IMR-90 (cell line): ENCODE measurements at regions of chrX and their contacts with region 1.

Region 1: GRCh38 chrX:110992611-110993010 is 103.4 kb upstream of the PAK3 start:
- DNase-seq: peak; percentile 13
- ATAC-seq: no peak
- H3K4me3 ChIP-seq: no peak overlapping the region
- H3K27ac ChIP-seq: no peak overlapping the region
- H3K4me1 ChIP-seq: no peaks in the 10 kb centered on the region
- H3K27me3 ChIP-seq: peaks cover 11% of the 10 kb centered on the region
- CTCF ChIP-seq: peak; percentile 44
- POLR2A ChIP-seq: no peak
- RAD21 ChIP-seq: peak; percentile 35

Region 2: DNA sequence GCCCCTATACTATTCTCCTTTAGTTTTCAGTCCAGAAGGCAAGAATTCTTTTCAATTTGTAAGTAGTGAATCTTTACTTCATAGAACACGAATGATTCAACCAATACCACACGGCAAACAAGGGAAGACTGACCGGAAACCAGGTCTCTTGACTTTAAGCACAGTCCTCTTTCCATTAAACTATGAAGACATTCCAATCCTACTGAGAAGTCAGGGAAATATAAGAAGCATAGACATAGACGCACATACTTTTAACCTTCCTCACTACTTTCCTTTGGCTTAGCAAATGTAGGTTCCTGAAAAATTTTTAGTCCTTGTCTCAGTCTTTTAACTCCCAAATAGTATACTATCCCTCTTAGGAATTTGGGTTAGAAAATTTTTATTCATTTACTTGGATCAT is 206.1 kb before region 1 on chrX:
- CTCF ChIA-PET with region 1: no interaction called
- POLR2A ChIA-PET with region 1: no interaction called
- dilution Hi-C with region 1: no loop called
- in situ Hi-C with region 1: no loop called
- intact Hi-C with region 1: no loop called
- DNase-seq: peak; percentile 68
- ATAC-seq: peak; percentile 24; the same call in 1 of the 2 replicates
- H3K4me3 ChIP-seq: no peak overlapping the region
- H3K27ac ChIP-seq: no peak overlapping the region
- H3K4me1 ChIP-seq: no peaks in the 10 kb centered on the region
- H3K27me3 ChIP-seq: peaks cover 8% of the 10 kb centered on the region
- CTCF ChIP-seq: no peak
- POLR2A ChIP-seq: no peak
- RAD21 ChIP-seq: no peak

Region 3: DNA sequence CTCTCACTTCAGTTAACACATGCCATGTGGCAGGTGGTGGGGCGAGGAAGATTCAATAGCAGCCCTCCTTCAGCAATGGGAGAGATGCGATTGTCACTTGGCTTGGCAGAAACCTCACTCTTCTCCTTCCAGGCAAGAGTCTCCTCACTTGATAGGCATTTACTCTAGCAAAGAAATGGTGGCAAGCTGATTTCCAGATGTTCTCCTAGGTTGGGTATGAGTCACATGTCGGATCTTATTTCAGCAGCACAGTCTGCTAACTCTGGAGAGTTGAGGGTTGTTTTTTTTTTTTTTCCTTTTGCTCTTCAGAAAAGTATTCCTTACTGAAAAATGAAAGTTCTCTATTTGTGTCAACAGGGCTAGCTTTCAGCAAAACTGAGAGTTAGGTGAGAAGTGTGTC is 77.5 kb before region 1 on chrX:
- CTCF ChIA-PET with region 1: no interaction called
- POLR2A ChIA-PET with region 1: interaction called, 15 read pairs
- dilution Hi-C with region 1: no loop called
- in situ Hi-C with region 1: no loop called
- intact Hi-C with region 1: no loop called
- DNase-seq: peak; percentile 69
- ATAC-seq: no peak
- H3K4me3 ChIP-seq: no peak overlapping the region
- H3K27ac ChIP-seq: no peak overlapping the region
- H3K4me1 ChIP-seq: no peaks in the 10 kb centered on the region
- H3K27me3 ChIP-seq: peaks cover 2% of the 10 kb centered on the region
- CTCF ChIP-seq: no peak
- POLR2A ChIP-seq: no peak
- RAD21 ChIP-seq: no peak

Region 4: DNA sequence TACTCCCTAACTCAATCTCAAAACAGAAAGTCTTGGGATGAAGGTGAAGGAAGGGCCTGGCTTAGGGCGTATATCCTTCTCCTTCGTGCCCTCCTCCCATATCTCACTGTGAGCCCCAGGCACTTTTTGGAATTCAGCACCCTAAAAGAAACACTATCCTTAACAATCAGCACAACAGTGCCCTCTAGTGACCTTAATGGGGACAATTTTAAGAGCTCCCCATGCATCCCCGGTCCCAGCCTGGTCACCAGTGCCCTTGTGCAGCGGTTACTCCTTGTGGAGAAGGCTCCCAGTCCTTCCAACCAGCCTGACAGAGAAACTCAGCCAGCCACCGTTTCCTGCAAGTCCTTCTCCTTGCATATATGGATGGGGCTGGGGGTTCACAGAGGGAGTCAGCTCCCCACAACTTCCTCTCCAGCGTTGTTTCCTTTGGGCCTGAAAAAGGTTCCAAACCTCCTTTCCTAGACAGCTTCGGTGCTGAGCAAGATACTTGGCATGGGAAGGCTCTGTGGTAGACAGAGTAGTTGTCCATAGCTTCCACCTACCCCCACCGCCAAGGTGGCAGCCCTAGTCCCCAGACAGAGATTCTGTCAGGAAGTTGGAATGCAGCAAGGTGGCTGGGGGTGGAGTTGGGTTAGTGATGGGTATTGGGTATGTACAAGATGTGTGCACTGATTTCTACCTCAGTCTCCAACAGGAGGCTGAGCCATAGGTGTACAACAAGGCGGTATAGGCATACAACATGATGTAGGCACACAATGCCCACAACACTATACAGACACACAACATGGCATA is 107.8 kb after region 1 on chrX:
- CTCF ChIA-PET with region 1: no interaction called
- POLR2A ChIA-PET with region 1: no interaction called
- dilution Hi-C with region 1: no loop called
- in situ Hi-C with region 1: no loop called
- intact Hi-C with region 1: loop called (anchors 1 kb)
- DNase-seq: peak; percentile 24
- ATAC-seq: peak; percentile 48; the same call in 1 of the 2 replicates
- H3K4me3 ChIP-seq: no peak overlapping the region
- H3K27ac ChIP-seq: no peak overlapping the region
- H3K4me1 ChIP-seq: no peaks in the 10 kb centered on the region
- H3K27me3 ChIP-seq: peaks cover 17% of the 10 kb centered on the region
- CTCF ChIP-seq: peak; percentile 50
- POLR2A ChIP-seq: no peak
- RAD21 ChIP-seq: peak; percentile 49